ENCODE measurements at regions of chr17 and their contacts with region 1.

Region 1: DNA sequence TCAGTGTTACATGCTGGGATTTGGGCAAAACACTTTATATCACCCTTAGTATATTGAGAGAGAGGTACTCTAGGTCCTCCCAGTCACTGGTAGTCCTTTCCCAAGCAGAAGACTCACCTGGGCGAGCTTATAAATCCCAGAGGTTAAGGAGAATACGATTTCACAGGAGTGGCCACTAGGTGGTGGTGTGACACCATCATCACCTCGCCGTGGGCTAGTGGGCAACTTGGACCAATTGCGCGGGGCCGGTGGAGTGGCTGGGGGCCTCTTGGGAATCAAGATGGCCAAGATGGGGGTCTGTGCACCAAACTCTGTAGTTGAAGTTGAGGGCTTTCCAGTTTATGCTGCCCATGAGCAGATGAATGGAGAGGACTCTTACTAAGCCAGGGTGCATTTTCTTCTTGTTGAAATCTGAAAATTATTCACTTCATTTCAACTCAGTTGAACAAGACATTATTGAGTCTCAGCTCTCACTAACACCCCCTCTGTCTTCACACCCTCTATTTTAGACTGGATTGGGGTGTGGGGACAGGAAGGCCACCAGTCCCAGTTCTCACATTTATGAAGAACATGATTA is 38.2 kb upstream of the PIRT start:
- DNase-seq: peak in 2 of 9 donors; percentile 4 to 25
- ATAC-seq: no peak
- H3K4me3 ChIP-seq: no peak overlapping the region
- H3K4me3 Mint-ChIP-seq: no peak overlapping the region
- H3K27ac ChIP-seq: no peak overlapping the region
- H3K27ac Mint-ChIP-seq: no peak overlapping the region
- H3K4me1 ChIP-seq: no peaks in the 10 kb centered on the region
- H3K4me1 Mint-ChIP-seq: peaks cover 0 to 4% (median 0%) of the 10 kb centered on the region in 7 donors
- H3K27me3 ChIP-seq: peaks cover 0 to 2% of the 10 kb centered on the region in 2 donors
- H3K27me3 Mint-ChIP-seq: peaks cover 0 to 54% (median 42%) of the 10 kb centered on the region in 5 donors

Region 2: DNA sequence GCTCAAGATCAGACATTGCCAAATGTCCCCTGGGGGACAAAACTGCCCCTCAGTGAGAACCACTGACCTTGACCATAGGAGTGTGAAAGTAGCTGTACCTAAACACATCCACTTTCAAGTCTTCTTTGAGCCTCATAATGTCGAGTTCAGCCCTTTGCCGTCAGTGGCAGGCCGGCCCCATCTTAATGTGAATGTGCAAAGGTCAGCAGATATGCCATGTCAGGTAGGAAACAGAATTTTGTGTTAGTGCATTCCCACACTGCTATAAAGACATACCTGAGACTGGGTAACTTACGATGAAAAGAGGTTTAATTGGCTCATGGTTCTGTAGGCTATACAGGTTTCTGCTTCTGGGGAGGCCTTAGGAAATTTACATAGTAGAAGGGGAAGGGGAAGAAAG is 56.9 kb after region 1 on chr17:
- CTCF ChIA-PET with region 1: no interaction called
- POLR2A ChIA-PET with region 1: no interaction called
- intact Hi-C with region 1: no loop called
- DNase-seq: no peak
- ATAC-seq: no peak
- H3K4me3 ChIP-seq: no peak overlapping the region
- H3K4me3 Mint-ChIP-seq: no peak overlapping the region
- H3K27ac ChIP-seq: no peak overlapping the region
- H3K27ac Mint-ChIP-seq: no peak overlapping the region
- H3K4me1 ChIP-seq: no peaks in the 10 kb centered on the region
- H3K4me1 Mint-ChIP-seq: no peaks in the 10 kb centered on the region
- H3K27me3 ChIP-seq: no peaks in the 10 kb centered on the region
- H3K27me3 Mint-ChIP-seq: peaks cover 0 to 39% (median 27%) of the 10 kb centered on the region in 5 donors

Region 3: GRCh38 chr17:11644261-11645212 is 768.5 kb after region 1 on chr17:
- CTCF ChIA-PET with region 1: no interaction called
- POLR2A ChIA-PET with region 1: no interaction called
- intact Hi-C with region 1: loop called in 1 of 2 experiments (anchors 5 kb)
- DNase-seq: peak; percentile 8 to 54 (median 39)
- ATAC-seq: peak; percentile 53
- H3K4me3 ChIP-seq: no peak overlapping the region
- H3K4me3 Mint-ChIP-seq: no peak overlapping the region
- H3K27ac ChIP-seq: no peak overlapping the region
- H3K27ac Mint-ChIP-seq: no peak overlapping the region
- H3K4me1 ChIP-seq: no peaks in the 10 kb centered on the region
- H3K4me1 Mint-ChIP-seq: peaks cover 0 to 8% (median 0%) of the 10 kb centered on the region in 7 donors
- H3K27me3 ChIP-seq: no peaks in the 10 kb centered on the region
- H3K27me3 Mint-ChIP-seq: peaks cover 0 to 7% (median 0%) of the 10 kb centered on the region in 5 donors

Region 4: GRCh38 chr17:11935734-11936406 is 1059.8 kb after region 1 on chr17:
- CTCF ChIA-PET with region 1: no interaction called
- POLR2A ChIA-PET with region 1: no interaction called
- intact Hi-C with region 1: loop called in 1 of 2 experiments (anchors 5 kb)
- DNase-seq: peak in 1 of 9 donors; percentile 27
- ATAC-seq: no peak
- H3K4me3 ChIP-seq: no peak overlapping the region
- H3K4me3 Mint-ChIP-seq: no peak overlapping the region
- H3K27ac ChIP-seq: no peak overlapping the region
- H3K27ac Mint-ChIP-seq: no peak overlapping the region
- H3K4me1 ChIP-seq: no peaks in the 10 kb centered on the region
- H3K4me1 Mint-ChIP-seq: peaks cover 0 to 2% (median 0%) of the 10 kb centered on the region in 7 donors
- H3K27me3 ChIP-seq: no peaks in the 10 kb centered on the region
- H3K27me3 Mint-ChIP-seq: peaks cover 0 to 15% (median 11%) of the 10 kb centered on the region in 5 donors